AG04449 (cell line): ENCODE measurements at regions of chr3 and their contacts with region 1.

Region 1: DNA sequence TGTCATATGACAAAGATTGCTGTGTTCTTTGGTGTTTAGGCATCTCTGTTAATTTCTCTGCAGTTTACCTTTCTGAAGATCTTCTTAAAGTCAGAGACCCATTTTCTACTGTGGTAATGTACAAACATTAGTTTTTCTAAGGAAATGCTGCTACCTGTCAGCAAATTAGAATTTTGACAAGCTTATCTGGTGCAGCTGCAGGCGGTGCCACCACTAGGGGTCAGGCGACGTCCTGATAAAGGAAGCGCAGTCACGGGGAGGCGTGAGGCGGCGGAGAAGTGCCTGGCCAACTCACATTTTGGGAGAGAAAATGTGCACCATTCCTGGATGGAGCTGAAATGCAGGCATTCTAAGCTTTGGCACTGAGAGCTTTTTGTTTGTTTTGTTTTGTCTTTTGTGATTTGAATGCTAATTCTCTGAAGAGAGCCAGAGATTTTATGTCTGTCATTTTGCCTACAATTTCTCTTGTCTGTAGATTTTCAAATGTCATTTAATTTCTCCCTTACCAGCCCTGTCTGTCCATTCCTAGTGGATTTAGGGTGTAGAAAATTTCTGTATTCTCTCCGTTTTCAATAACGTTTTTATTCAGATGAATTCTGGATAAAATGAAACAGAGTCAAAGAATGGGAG is 24.9 kb upstream of the SIAH2 start:
- DNase-seq: no peak
- H3K4me3 ChIP-seq: no peak overlapping the region
- CTCF ChIP-seq: peak; percentile 91

Region 2: GRCh38 chr3:150775091-150775501 is 12.8 kb before region 1 on chr3:
- CTCF ChIA-PET with region 1: interaction called, 85 read pairs
- POLR2A ChIA-PET with region 1: no interaction called
- DNase-seq: peak; percentile 63
- H3K4me3 ChIP-seq: no peak overlapping the region
- CTCF ChIP-seq: no peak

Region 3: GRCh38 chr3:150805354-150805753 is 17.5 kb after region 1 on chr3:
- CTCF ChIA-PET with region 1: interaction called, 10 read pairs
- POLR2A ChIA-PET with region 1: no interaction called
- DNase-seq: no peak
- H3K4me3 ChIP-seq: no peak overlapping the region
- CTCF ChIP-seq: no peak

Region 4: DNA sequence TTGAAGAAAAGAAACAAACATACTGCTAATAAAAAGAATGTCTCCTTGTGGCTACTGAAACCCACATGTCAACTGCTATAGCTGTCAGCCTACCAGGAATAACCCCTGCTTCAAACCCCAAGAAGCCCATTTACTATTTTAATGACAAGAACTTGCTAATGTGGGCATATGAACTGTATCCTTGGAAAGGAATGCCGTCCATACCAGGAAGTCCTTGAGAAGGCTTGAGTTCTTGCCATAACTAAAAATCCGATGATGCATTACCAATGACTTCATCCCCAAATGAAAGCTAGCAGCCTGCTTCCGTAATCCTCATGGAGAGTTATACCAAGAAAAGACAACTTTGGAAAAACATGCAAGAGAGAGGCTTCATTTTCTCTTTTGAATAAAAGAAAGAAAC is 82.5 kb after region 1 on chr3:
- CTCF ChIA-PET with region 1: interaction called, 30 read pairs
- POLR2A ChIA-PET with region 1: no interaction called
- DNase-seq: peak; percentile 55
- H3K4me3 ChIP-seq: no peak overlapping the region
- CTCF ChIP-seq: no peak